Thyroid gland (tissue), 4 donors: ENCODE measurements at regions of chr1 and their contacts with region 1.

Region 1: GRCh38 chr1:116498789-116499628 is 71.8 kb downstream of the CD58 start:
- DNase-seq: peak; percentile 34 to 46
- H3K4me3 ChIP-seq: no peak overlapping the region
- H3K27ac ChIP-seq: no peak overlapping the region
- H3K4me1 ChIP-seq: no peaks in the 10 kb centered on the region
- H3K27me3 ChIP-seq: no peaks in the 10 kb centered on the region
- CTCF ChIP-seq: peak; percentile 64 to 95 (median 86)
- POLR2A ChIP-seq: no peak

Region 2: GRCh38 chr1:116133696-116134650 is 365.0 kb before region 1 on chr1:
- intact Hi-C with region 1: loop called (anchors 5 kb)
- DNase-seq: no peak
- H3K4me3 ChIP-seq: no peak overlapping the region
- H3K27ac ChIP-seq: no peak overlapping the region
- H3K4me1 ChIP-seq: no peaks in the 10 kb centered on the region
- H3K27me3 ChIP-seq: no peaks in the 10 kb centered on the region
- CTCF ChIP-seq: peak in 1 of 6 experiments; percentile 12
- POLR2A ChIP-seq: no peak

Region 3: DNA sequence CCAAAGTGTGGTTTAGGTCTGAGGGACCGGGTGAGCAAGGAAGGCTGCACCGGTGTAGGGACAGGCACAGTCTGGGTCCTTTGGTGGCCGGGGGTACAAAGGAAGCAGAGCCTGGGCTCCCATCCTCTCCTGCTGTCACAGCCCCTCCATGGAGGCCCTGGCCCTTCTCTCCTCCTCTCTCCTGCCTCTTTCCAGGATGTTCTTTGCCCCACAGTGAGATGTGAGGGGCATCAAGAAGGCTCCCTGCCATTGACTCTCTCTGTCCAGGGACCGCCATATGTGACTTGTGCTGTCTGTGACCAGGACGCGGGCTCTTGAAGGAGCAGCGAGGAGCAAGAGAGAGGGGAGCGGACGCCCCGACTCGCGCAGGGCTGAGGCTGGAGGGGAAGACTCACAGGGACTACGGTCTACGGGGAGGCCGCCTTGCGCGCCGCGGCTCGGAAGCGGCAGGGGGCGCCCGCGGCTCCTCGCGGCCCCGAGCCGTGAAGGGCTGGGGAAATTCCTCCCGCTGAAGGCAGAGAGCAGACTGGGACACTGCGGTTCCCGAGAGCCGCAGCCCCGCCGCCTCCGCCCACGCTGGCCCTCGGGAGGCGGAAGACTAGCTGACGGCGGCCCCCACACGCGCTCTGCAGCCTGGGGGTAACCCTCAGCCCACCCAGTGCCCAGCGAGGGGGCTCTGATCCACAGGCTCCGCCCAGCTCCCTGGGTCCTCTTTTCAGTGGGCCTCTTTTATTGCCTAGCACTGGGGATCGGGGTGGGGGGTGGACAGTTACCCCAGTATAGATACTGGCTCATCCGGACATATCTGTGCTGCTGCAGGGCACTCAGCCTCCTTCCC is 347.1 kb before region 1 on chr1:
- intact Hi-C with region 1: loop called (anchors 5 kb)
- DNase-seq: peak; percentile 76 to 78
- H3K4me3 ChIP-seq: no peak overlapping the region
- H3K27ac ChIP-seq: peak overlapping the region in 2 of 3 donors; percentile 58 to 74
- H3K4me1 ChIP-seq: peaks cover 4 to 8% of the 10 kb centered on the region in 2 donors
- H3K27me3 ChIP-seq: no peaks in the 10 kb centered on the region
- CTCF ChIP-seq: peak; percentile 67 to 96 (median 86)
- POLR2A ChIP-seq: peak in 1 of 2 donors; percentile 21